Endothelial cell of umbilical vein (primary cell): ENCODE measurements at regions of chr3 and their contacts with region 1.

Region 1: DNA sequence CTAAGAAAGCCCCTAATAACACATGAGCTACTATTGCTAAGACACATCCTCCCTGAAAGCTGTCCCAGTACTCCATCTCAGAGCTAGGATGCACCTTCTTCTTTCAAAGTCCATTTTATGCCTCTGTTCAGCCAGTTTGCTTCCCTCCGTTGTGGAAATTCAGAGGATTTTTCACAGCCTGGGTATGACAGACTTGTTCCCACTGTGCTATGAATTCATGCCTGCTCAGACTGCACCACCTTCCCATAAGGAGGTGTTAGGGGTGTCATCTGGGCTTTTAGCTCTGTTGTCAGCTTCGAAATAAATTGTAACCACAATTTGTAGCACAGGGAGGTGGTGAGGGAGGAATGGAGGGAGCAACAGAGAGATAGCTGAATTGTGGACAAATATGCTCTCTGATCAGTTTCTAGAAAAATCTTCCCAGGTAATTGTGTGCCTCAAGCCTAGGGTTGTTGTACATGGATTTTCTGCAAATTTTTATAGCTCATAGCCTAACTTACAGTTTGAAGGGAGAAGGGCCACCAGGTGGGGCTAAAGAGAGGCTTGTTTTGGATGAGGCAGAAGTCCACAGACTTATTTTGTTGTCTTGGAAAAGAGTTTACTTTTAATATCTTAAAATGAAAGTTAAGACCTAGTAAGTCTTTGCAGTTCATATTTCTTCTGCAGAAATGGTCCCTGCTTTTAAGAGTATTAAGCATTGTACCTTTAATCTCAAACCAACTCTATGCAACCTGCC is 462.0 kb downstream of the PDCD6IP start:
- DNase-seq: peak; percentile 61
- H3K4me3 ChIP-seq: no peak overlapping the region
- H3K27ac ChIP-seq: no peak overlapping the region
- H3K4me1 ChIP-seq: no peaks in the 10 kb centered on the region
- H3K27me3 ChIP-seq: no peaks in the 10 kb centered on the region
- CTCF ChIP-seq: peak; percentile 57 to 63
- POLR2A ChIP-seq: no peak

Region 2: GRCh38 chr3:33773637-33774036 is 486.8 kb before region 1 on chr3:
- CTCF ChIA-PET with region 1: no interaction called
- POLR2A ChIA-PET with region 1: no interaction called
- dilution Hi-C with region 1: no loop called
- intact Hi-C with region 1: no loop called
- DNase-seq: no peak
- H3K4me3 ChIP-seq: no peak overlapping the region
- H3K27ac ChIP-seq: no peak overlapping the region
- H3K4me1 ChIP-seq: no peaks in the 10 kb centered on the region
- H3K27me3 ChIP-seq: no peaks in the 10 kb centered on the region
- CTCF ChIP-seq: no peak
- POLR2A ChIP-seq: no peak

Region 3: DNA sequence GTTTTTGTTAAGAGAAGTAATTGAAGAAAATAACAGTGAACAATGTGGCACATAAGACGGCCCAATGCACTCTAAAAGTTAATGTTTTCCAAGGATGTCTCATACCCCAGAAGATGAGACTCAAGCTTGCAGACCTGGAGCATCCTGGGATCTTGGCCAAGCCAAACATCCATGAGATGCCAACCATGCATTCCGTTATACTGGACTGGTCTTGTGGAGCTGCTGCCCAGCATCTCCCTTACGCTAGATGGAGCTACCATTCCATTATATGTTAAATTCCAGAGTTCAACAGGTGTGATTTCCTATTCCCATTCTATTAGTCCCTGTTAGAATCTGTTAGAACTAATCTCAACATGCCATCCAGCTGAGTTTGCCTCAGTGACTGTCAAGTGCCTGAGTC is 280.2 kb before region 1 on chr3:
- CTCF ChIA-PET with region 1: interaction called, 10 read pairs
- POLR2A ChIA-PET with region 1: no interaction called
- dilution Hi-C with region 1: no loop called
- intact Hi-C with region 1: no loop called
- DNase-seq: peak; percentile 31
- H3K4me3 ChIP-seq: no peak overlapping the region
- H3K27ac ChIP-seq: no peak overlapping the region
- H3K4me1 ChIP-seq: no peaks in the 10 kb centered on the region
- H3K27me3 ChIP-seq: peaks cover 0 to 2% of the 10 kb centered on the region in 2 experiments
- CTCF ChIP-seq: peak; percentile 41 to 44
- POLR2A ChIP-seq: no peak

Region 4: GRCh38 chr3:34207002-34207401 is 53.4 kb before region 1 on chr3:
- CTCF ChIA-PET with region 1: interaction called, 15 read pairs
- POLR2A ChIA-PET with region 1: no interaction called
- dilution Hi-C with region 1: no loop called
- intact Hi-C with region 1: no loop called
- DNase-seq: peak; percentile 92
- H3K4me3 ChIP-seq: no peak overlapping the region
- H3K27ac ChIP-seq: peak overlapping the region; percentile 59
- H3K4me1 ChIP-seq: peaks cover 42% of the 10 kb centered on the region
- H3K27me3 ChIP-seq: no peaks in the 10 kb centered on the region
- CTCF ChIP-seq: no peak
- POLR2A ChIP-seq: peak; percentile 18

Region 5: GRCh38 chr3:34218706-34219385 is 41.6 kb before region 1 on chr3:
- CTCF ChIA-PET with region 1: interaction called, 13 read pairs
- POLR2A ChIA-PET with region 1: no interaction called
- dilution Hi-C with region 1: no loop called
- intact Hi-C with region 1: no loop called
- DNase-seq: peak; percentile 30
- H3K4me3 ChIP-seq: no peak overlapping the region
- H3K27ac ChIP-seq: peak overlapping the region; percentile 80
- H3K4me1 ChIP-seq: peaks cover 42% of the 10 kb centered on the region
- H3K27me3 ChIP-seq: no peaks in the 10 kb centered on the region
- CTCF ChIP-seq: no peak
- POLR2A ChIP-seq: no peak

Region 6: GRCh38 chr3:34277110-34277509 is 16.7 kb after region 1 on chr3:
- CTCF ChIA-PET with region 1: interaction called, 11 read pairs
- POLR2A ChIA-PET with region 1: no interaction called
- dilution Hi-C with region 1: no loop called
- intact Hi-C with region 1: no loop called
- DNase-seq: no peak
- H3K4me3 ChIP-seq: no peak overlapping the region
- H3K27ac ChIP-seq: no peak overlapping the region
- H3K4me1 ChIP-seq: no peaks in the 10 kb centered on the region
- H3K27me3 ChIP-seq: no peaks in the 10 kb centered on the region
- CTCF ChIP-seq: no peak
- POLR2A ChIP-seq: no peak

Region 7: GRCh38 chr3:34439796-34440195 is 179.4 kb after region 1 on chr3:
- CTCF ChIA-PET with region 1: no interaction called
- POLR2A ChIA-PET with region 1: no interaction called
- dilution Hi-C with region 1: no loop called
- intact Hi-C with region 1: no loop called
- DNase-seq: no peak
- H3K4me3 ChIP-seq: no peak overlapping the region
- H3K27ac ChIP-seq: no peak overlapping the region
- H3K4me1 ChIP-seq: no peaks in the 10 kb centered on the region
- H3K27me3 ChIP-seq: no peaks in the 10 kb centered on the region
- CTCF ChIP-seq: no peak
- POLR2A ChIP-seq: no peak

Region 8: DNA sequence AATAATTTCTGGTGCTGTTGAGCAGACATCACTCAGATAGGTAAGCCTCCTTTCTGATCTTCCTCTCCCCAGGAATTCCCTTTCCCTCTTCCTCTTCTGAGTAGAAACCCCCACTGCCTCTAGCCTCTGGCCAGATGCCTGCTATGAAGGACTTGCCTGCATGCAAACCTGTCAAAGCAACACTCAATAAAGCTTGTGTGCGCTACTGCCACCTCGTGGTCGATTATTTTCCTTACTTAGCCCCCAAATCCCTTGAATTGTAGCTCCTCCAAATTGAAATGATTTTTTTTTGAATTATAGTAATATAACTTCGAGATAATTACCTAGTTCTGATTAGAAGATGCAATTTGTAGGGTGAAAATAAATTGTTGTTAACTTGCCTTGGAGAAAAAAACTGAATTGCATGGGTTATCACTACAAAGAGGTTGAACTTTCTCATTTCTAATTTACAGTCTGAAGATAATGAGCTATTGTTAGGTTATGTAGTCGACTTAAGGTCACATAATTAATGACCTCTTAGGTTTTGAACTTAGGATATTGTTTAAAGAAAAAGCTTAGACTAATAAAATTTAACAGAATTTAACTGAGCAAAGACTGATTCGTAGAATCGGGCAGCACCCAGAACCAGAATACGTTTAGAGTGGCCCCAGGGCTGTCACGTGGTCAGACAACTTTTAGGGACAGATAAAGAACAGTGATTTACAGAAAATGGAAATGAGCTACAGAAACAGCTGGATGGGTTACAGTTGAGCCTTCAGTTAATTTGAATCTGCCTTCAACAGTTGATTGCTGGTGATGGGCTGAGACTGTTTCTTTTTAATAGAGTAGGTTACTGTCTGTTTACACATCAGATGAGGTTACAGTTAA is 1648.2 kb after region 1 on chr3:
- CTCF ChIA-PET with region 1: interaction called, 43 read pairs
- POLR2A ChIA-PET with region 1: no interaction called
- dilution Hi-C with region 1: no loop called
- intact Hi-C with region 1: no loop called
- DNase-seq: peak; percentile 84
- H3K4me3 ChIP-seq: no peak overlapping the region
- H3K27ac ChIP-seq: no peak overlapping the region
- H3K4me1 ChIP-seq: no peaks in the 10 kb centered on the region
- H3K27me3 ChIP-seq: peaks cover 2 to 5% of the 10 kb centered on the region in 2 experiments
- CTCF ChIP-seq: peak; percentile 64 to 73
- POLR2A ChIP-seq: no peak